ENCODE measurements at regions of chr15 and their contacts with region 1.

Region 1: DNA sequence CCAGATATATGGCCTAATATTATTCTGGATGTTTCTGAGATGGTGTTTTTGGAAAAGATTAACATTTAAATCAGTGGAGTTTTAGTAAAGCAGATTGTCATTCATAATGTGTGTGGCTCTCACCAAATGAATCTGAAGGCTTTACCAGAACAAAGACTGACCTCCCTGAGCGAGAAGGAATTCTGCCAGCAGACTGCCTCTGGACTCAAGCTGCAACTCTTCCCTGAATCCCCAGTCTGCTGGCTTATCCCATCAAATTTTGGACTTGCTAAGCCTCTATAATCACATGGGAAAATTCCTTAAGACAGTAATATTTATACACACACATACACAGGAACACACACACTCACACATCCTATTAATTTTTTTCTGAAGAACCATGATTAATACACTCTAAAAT is 102.3 kb downstream of the FAM174B start:
- DNase-seq: no peak
- H3K4me3 Mint-ChIP-seq: no peak overlapping the region
- H3K27ac Mint-ChIP-seq: no peak overlapping the region
- H3K4me1 Mint-ChIP-seq: no peaks in the 10 kb centered on the region
- H3K27me3 Mint-ChIP-seq: peaks cover 33% of the 10 kb centered on the region

Region 2: DNA sequence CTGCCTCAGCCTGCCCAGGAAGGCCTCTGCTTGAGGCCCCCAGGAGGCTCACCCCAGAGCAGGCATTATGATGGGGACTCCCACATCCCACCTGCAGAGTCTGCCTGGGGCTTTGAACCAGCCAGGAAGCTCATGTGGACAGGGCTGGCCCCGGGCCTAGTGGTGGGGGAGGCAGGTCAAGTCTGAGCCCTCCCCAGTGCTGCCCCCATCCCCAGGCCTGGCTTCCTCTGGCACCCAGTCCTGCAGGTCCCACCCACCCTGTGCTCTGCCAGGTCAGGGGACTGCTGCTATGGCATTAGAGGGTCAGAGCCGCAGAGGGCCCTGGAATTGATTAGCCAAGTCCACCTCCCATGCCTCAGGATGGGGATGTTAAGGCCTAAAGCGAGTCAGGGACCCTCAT is 1513.3 kb before region 1 on chr15:
- intact Hi-C with region 1: loop called (anchors 5 kb)
- DNase-seq: no peak
- H3K4me3 Mint-ChIP-seq: no peak overlapping the region
- H3K27ac Mint-ChIP-seq: no peak overlapping the region
- H3K4me1 Mint-ChIP-seq: no peaks in the 10 kb centered on the region
- H3K27me3 Mint-ChIP-seq: peaks cover 10% of the 10 kb centered on the region

Region 3: DNA sequence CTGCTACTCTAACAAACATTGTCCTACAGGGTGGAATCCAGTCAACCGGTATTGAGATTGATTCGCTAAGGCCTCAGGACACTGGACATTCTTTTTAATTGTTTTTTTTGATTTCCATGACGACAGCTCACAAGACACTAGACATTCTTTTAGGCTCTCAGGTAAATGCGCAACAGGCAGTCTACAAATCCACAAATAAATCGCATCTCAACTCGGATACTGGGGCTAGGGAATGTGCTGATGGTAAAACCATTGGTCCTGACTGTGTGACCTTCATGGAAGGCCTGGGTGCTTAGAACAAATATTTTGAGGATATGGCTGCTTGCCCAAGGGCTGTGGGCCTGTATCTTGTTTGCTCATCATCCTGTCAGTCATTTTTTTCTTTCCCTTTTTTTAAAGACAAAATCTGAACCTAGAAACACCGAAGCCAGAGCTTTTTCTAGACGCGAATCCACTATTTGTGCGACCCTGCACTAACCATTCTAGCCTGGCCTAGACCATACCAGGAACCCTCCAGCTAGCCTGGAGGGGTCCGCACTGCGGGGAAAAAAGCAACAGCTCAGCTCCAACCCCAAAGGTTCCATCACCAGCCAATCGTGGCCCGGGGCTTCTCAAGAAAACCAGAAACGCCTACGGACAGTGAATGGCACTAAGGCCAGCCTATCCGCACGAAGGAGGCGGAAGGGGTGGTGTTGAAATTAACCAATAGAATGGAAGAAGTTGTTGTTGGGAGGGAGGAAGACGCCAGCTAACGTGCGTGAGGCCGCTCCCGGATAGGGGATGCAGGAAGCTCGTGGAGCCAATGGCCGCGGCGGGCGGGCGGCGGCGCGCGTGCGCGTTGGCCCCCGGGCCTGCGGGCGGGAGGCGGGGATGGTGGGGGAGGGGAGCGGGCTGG is 328.7 kb after region 1 on chr15:
- intact Hi-C with region 1: no loop called
- DNase-seq: peak; percentile 97
- H3K4me3 Mint-ChIP-seq: peak overlapping the region; percentile 87
- H3K27ac Mint-ChIP-seq: peak overlapping the region; percentile 97
- H3K4me1 Mint-ChIP-seq: peaks cover 60% of the 10 kb centered on the region
- H3K27me3 Mint-ChIP-seq: no peaks in the 10 kb centered on the region

Measured in activated T-helper 1 cell treated with anti-CD3 and anti-CD28 coated beads, Interleukin-12 subunit alpha, Interleukin-12 subunit beta, Interleukin-2, Interleukin-4 antibody, amounts not matched to agents 30 ng/mL and 10 ng/mL and 1 ng/mL, durations not matched to agents 14 hours and 24 hours and 36 hours (primary cell).